AG04449 (cell line): ENCODE measurements at regions of chr2 and their contacts with region 1.

Region 1: DNA sequence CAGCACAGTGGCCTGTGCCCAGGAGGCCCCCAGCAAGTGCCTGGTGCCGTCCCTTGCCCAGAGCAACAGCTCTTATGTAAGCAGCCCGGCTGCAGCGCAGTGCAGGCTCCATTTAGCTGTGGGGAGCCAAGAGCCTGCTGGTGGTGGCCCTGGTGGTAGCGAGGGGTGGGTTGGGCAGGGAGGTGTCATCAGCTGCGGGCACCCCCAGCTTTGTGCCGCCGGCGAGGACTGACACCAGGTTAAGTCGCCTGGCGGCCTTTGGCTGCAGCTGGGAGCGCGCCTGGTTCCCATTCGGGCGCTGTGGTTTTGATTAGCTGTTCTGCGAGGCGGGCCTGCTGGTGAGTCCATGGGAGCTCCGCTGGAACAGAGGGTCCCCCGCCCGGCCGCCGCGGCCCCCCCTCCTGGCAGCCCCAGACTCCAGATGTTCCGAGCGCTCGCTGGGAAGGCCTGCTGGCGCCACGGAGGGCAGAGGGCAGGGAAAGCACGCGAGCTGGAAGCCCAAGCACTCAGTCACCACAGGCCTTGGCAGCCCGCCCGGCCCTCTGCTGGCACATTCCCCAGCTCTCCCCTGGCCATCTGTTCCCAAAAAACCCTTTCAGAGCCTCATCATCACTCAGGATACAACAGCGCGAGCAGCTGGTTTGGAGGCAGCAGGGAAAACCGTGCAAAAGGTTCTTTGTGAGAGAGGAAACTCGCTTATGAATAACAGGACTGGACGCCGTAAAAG is 18.4 kb downstream of the ATOH8 start:
- DNase-seq: peak; percentile 97
- H3K4me3 ChIP-seq: peak overlapping the region; percentile 38
- CTCF ChIP-seq: peak; percentile 25

Region 2: DNA sequence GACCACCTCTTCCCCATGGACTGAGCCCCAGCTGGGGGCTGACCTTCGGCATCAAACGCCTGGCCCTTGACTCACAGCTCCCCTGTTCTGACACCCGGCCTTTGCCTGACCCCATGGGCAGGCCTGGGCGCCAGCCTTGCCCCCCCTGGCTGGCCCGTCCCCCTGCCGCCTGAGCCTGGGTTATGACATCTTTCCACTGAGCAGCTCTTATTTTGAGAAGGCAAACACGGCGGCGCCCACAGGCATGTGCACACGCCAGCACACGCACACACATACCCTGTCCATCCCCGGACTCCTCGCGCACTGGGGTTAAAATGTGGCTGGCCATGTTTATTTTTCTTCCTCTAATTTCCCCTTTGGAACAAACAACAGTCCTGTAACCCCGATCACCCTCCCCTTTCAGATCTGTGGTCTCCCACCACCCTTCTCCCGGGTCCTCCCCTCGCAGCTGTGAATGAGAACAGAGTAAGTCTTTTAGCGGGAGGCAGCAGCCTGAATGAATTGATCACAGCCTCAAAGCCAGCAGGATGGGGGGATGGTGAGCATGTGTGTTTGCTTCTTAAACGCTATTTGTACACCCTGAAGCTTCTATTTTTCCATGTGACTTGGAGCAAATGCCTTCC is 30.2 kb before region 1 on chr2:
- CTCF ChIA-PET with region 1: interaction called, 463 read pairs
- POLR2A ChIA-PET with region 1: interaction called, 16 read pairs
- DNase-seq: peak; percentile 88
- H3K4me3 ChIP-seq: peak overlapping the region; percentile 23
- CTCF ChIP-seq: no peak

Region 3: DNA sequence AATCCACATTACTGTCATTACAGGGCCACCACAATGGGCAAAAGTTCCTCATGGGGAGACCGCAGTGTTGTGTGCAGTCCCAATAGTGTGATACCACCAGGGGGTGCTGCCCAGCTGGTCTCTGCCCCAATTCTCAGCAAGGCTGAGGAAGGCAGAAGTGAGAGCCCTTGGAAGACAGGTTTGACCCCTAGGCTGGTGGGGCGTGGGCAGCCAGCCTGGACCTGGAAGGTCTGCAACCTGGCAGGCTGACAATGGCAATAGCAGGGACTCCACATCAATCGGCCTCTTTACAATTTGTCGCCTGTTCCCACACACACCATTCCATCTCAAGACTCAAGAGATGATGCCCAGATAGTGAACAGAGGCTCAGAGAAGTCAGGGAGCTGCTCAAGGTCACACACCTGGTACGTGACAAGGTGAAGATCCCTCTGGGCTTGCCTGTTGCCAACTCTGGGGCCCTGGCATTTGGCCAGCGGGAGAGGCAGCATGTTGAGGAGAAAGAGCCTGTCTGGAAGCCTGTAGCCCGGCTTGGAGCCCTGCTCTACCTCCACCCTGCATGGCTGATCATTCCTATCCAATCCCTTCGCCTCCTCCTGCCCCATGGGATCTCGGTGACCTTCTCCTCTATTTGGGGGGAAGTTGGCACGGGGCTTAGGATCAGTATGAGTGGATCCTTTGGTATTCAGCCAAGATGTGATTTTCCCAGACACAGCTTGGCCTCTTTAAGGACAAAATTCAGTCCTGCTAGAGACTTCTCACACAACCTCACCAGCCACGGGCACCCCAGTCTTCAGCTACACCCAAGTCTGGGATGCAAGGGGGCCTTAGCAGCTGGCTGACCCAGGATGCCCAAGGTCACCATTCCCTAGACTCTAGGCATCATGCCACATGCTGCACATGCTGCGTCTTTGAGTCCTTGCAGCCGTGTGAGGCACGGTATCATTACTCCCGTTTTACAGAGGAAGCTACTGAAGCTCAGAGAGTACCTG is 21.3 kb before region 1 on chr2:
- CTCF ChIA-PET with region 1: interaction called, 463 read pairs
- POLR2A ChIA-PET with region 1: interaction called, 16 read pairs
- DNase-seq: no peak
- H3K4me3 ChIP-seq: no peak overlapping the region
- CTCF ChIP-seq: peak; percentile 87

Region 4: DNA sequence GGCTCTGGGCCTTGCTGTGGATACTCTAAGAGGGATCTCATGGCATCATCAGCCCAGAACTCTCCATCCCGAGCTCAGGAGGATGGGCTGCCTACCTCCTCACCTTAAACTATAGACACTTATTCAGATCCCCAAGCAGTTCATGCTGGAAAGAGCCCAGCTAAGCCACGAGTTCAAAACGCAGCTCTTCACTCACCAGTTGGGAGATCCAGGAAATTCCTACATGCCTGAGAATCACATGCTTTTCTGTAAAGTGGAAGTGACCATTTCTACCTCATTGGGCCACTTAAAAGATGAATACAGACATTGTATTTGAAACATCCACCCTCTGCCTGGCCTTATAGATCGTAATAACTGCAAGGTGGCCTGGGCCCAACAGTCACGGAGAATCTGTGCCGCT is 11.8 kb before region 1 on chr2:
- CTCF ChIA-PET with region 1: interaction called, 463 read pairs
- POLR2A ChIA-PET with region 1: interaction called, 20 read pairs
- DNase-seq: no peak
- H3K4me3 ChIP-seq: no peak overlapping the region
- CTCF ChIP-seq: no peak

Region 5: GRCh38 chr2:85785027-85785822 is 13.0 kb after region 1 on chr2:
- CTCF ChIA-PET with region 1: interaction called, 12 read pairs
- POLR2A ChIA-PET with region 1: interaction called, 22 read pairs
- DNase-seq: peak; percentile 59
- H3K4me3 ChIP-seq: peak overlapping the region; percentile 8; the same call in 1 of the 2 replicates
- CTCF ChIP-seq: no peak